ENCODE measurements at regions of chr2 and their contacts with region 1.

Region 1: GRCh38 chr2:239216614-239217273 is 184.1 kb downstream of the HDAC4 start:
- DNase-seq: peak; percentile 72
- H3K4me3 Mint-ChIP-seq: peak overlapping the region; percentile 69
- H3K27ac Mint-ChIP-seq: peak overlapping the region; percentile 87
- H3K4me1 Mint-ChIP-seq: peaks cover 71% of the 10 kb centered on the region
- H3K27me3 Mint-ChIP-seq: no peaks in the 10 kb centered on the region

Region 2: DNA sequence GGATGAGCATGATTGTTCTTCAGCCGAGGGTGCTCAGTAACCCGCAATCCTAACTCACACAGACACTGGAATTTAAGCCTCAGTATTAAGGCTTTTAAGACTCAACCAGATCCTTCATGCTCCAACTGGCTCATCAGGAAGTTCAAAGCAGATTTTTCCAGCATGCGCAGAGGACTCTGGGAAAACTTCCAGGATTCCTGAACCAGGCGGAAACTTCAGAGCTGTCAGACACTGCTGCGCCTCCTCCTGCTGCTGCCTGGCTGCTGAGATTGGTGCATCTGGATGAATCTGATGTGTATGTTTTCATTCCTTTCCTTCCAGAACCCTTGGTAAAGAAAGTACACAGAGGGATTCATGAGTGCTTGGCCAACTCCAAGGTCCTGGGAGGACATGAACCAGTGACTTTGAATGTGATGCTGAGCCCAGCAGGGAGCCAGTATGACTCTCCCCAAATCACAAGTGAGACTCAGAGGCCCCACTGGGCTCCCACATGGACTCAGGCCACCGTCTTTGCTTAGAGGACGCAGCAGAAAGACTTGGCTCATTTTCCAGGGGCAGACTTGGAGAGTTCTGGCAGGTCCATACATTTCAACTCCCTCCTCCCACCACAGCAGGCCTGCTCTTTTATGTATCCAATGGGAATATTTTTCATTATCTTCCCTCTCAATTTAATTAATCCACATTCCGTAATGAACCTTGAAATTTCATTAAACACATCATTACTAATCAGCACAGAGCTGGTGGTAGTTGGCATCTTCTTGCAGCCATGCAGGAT is 327.6 kb after region 1 on chr2:
- CTCF ChIA-PET with region 1: no interaction called
- intact Hi-C with region 1: loop called (anchors 5 kb)
- DNase-seq: no peak
- H3K4me3 Mint-ChIP-seq: no peak overlapping the region
- H3K27ac Mint-ChIP-seq: no peak overlapping the region
- H3K4me1 Mint-ChIP-seq: peaks cover 35% of the 10 kb centered on the region
- H3K27me3 Mint-ChIP-seq: peaks cover 11% of the 10 kb centered on the region

Measured in activated naive CD4-positive, alpha-beta T cell treated with anti-CD3 and anti-CD28 coated beads for 36 hours (primary cell).